ENCODE measurements at regions of chr17 and their contacts with region 1.

Region 1: GRCh38 chr17:57284984-57285646 is 28.8 kb downstream of the MSI2 start:
- DNase-seq: no peak
- ATAC-seq: no peak

Region 2: GRCh38 chr17:57142925-57143324 is 142.2 kb before region 1 on chr17:
- intact Hi-C with region 1: loop called (anchors 5 kb)
- DNase-seq: no peak
- ATAC-seq: peak; percentile 52